Activated CD4-positive, alpha-beta memory T cell treated with anti-CD3 and anti-CD28 coated beads for 36 hours (primary cell): ENCODE measurements at regions of chr6 and their contacts with region 1.

Region 1: DNA sequence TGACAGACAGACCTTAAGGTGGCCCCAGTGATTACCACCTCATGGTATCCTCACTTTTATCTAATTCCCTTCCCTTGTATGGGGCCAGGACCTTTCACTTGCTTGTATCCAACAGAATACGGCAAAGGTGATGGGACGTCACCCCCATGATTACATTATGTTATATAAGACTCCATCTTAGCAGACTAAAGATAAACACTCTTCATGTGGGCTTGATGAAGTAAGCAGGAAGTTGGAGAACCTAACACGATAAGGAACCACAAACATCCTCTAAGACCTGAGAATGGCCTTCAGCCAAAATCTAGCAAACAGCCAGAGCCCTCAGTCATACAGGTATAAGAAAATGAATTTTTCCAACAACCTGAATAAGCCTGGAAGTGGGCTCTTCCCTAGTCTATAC is 8.0 kb downstream of the SLC17A3 start:
- DNase-seq: peak; percentile 19
- H3K4me3 Mint-ChIP-seq: no peak overlapping the region
- H3K27ac Mint-ChIP-seq: peak overlapping the region; percentile 32
- H3K4me1 Mint-ChIP-seq: peaks cover 26% of the 10 kb centered on the region
- H3K27me3 Mint-ChIP-seq: no peaks in the 10 kb centered on the region

Region 2: GRCh38 chr6:25777031-25777430 is 89.0 kb before region 1 on chr6:
- CTCF ChIA-PET with region 1: no interaction called
- POLR2A ChIA-PET with region 1: no interaction called
- intact Hi-C with region 1: loop called (anchors 5 kb)
- DNase-seq: no peak
- H3K4me3 Mint-ChIP-seq: no peak overlapping the region
- H3K27ac Mint-ChIP-seq: no peak overlapping the region
- H3K4me1 Mint-ChIP-seq: peaks cover 19% of the 10 kb centered on the region
- H3K27me3 Mint-ChIP-seq: peaks cover 2% of the 10 kb centered on the region

Region 3: DNA sequence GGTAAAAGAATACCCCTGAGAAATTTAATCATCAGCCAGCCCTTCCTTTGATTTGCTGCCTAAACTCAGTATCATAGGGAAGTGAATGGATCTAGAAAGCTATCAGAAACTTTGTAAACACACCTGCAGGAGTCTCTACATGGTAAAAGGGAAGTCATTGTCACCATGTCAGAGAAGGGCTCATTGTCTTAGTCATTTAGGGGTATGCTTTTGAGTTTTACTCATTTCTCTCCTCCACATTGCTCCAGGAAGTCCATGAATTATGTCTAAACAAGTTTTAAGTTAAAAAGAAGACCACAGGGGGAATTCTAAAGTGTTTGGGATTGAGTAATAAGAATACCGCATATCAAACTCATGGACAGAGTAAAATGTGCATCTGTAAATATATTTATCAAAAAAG is 36.6 kb before region 1 on chr6:
- CTCF ChIA-PET with region 1: no interaction called
- POLR2A ChIA-PET with region 1: no interaction called
- intact Hi-C with region 1: loop called (anchors 5 kb)
- DNase-seq: no peak
- H3K4me3 Mint-ChIP-seq: no peak overlapping the region
- H3K27ac Mint-ChIP-seq: no peak overlapping the region
- H3K4me1 Mint-ChIP-seq: peaks cover 9% of the 10 kb centered on the region
- H3K27me3 Mint-ChIP-seq: peaks cover 26% of the 10 kb centered on the region